H1 (cell line): ENCODE measurements at regions of chr15 and their contacts with region 1.

Region 1: GRCh38 chr15:73727330-73727976 is 25.7 kb downstream of the INSYN1 start:
- DNase-seq: no peak
- H3K4me3 ChIP-seq: no peak overlapping the region
- H3K27ac ChIP-seq: no peak overlapping the region
- H3K4me1 ChIP-seq: no peaks in the 10 kb centered on the region; a peak in 1 of 7 replicates
- H3K27me3 ChIP-seq: no peaks in the 10 kb centered on the region
- CTCF ChIP-seq: no peak
- EP300 ChIP-seq: no peak
- POLR2A ChIP-seq: no peak
- RAD21 ChIP-seq: no peak

Region 2: GRCh38 chr15:73712088-73712487 is 15.4 kb before region 1 on chr15:
- CTCF ChIA-PET with region 1: interaction called, 187 read pairs
- POLR2A ChIA-PET with region 1: interaction called, 3 read pairs
- DNase-seq: no peak
- H3K4me3 ChIP-seq: no peak overlapping the region
- H3K27ac ChIP-seq: no peak overlapping the region
- H3K4me1 ChIP-seq: no peaks in the 10 kb centered on the region
- H3K27me3 ChIP-seq: no peaks in the 10 kb centered on the region
- CTCF ChIP-seq: peak; percentile 61 to 76 (median 70)
- EP300 ChIP-seq: no peak
- POLR2A ChIP-seq: no peak
- RAD21 ChIP-seq: peak; percentile 65 to 77